ENCODE measurements at regions of chr1 and their contacts with region 1.

Region 1: GRCh38 chr1:230867903-230868735 is at the start of gene C1orf198:
- DNase-seq: peak; percentile 81
- ATAC-seq: peak; percentile 95
- H3K4me3 Mint-ChIP-seq: peak within 1 kb of the TSS; percentile 89
- H3K27ac Mint-ChIP-seq: peak within 1 kb of the TSS; percentile 56
- H3K4me1 Mint-ChIP-seq: peaks cover 13% of the 10 kb centered on the region
- H3K27me3 Mint-ChIP-seq: peaks cover 21% of the 10 kb centered on the region
- CTCF ChIP-seq: no peak
- total RNA-seq, gene C1orf198: 3.5 and 3.9 TPM in 2 replicates

Region 2: GRCh38 chr1:230781594-230781993 is 86.5 kb before region 1 on chr1:
- CTCF ChIA-PET with region 1: no interaction called
- POLR2A ChIA-PET with region 1: no interaction called
- intact Hi-C with region 1: no loop called
- DNase-seq: no peak
- ATAC-seq: no peak
- H3K4me3 Mint-ChIP-seq: no peak overlapping the region
- H3K27ac Mint-ChIP-seq: no peak overlapping the region
- H3K4me1 Mint-ChIP-seq: no peaks in the 10 kb centered on the region
- H3K27me3 Mint-ChIP-seq: peaks cover 6% of the 10 kb centered on the region
- CTCF ChIP-seq: no peak

Region 3: DNA sequence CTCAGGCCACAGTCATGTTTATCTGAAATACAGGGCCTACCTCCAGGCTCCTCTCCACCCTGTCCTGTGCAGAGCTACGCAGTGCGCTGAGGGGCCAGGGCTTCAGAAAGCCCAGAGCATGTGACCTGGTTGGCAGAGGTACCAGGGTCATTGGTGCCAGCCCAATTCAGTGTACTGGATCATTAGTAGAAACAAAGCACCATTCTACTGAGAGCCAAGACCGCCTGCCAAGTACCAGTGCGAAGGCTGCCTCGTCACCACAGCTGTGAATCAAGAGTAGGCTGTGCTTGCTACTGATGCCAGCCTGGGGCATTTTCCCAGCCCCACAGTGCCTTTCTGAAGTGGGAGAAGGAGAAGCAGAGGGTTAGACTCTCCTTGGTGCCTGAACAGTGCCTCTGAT is 61.1 kb before region 1 on chr1:
- CTCF ChIA-PET with region 1: no interaction called
- POLR2A ChIA-PET with region 1: no interaction called
- intact Hi-C with region 1: no loop called
- DNase-seq: no peak
- ATAC-seq: no peak
- H3K4me3 Mint-ChIP-seq: no peak overlapping the region
- H3K27ac Mint-ChIP-seq: no peak overlapping the region
- H3K4me1 Mint-ChIP-seq: no peaks in the 10 kb centered on the region
- H3K27me3 Mint-ChIP-seq: peaks cover 9% of the 10 kb centered on the region
- CTCF ChIP-seq: no peak

Region 4: DNA sequence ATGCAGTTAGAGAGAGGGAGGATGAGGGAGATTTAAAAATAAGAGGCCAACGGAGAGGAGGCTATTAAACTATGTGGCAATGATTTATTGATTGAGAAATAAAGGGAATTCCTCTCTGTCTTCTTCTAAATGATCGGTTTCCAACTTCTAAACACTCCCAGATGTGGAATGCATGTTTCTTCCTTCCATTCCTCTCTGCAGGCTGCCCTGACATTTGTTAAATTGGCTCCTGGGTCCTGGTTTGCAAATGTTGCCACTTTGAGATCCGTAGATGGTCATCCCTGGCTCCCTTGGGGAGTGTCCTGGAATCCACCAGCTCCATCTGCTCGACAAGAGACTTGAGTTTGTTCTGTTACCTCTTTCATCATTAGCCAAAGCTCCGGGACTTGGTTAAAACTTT is 10.5 kb after region 1 on chr1:
- CTCF ChIA-PET with region 1: no interaction called
- POLR2A ChIA-PET with region 1: no interaction called
- intact Hi-C with region 1: no loop called
- DNase-seq: no peak
- ATAC-seq: no peak
- H3K4me3 Mint-ChIP-seq: no peak overlapping the region
- H3K27ac Mint-ChIP-seq: no peak overlapping the region
- H3K4me1 Mint-ChIP-seq: no peaks in the 10 kb centered on the region
- H3K27me3 Mint-ChIP-seq: peaks cover 53% of the 10 kb centered on the region
- CTCF ChIP-seq: no peak

Region 5: DNA sequence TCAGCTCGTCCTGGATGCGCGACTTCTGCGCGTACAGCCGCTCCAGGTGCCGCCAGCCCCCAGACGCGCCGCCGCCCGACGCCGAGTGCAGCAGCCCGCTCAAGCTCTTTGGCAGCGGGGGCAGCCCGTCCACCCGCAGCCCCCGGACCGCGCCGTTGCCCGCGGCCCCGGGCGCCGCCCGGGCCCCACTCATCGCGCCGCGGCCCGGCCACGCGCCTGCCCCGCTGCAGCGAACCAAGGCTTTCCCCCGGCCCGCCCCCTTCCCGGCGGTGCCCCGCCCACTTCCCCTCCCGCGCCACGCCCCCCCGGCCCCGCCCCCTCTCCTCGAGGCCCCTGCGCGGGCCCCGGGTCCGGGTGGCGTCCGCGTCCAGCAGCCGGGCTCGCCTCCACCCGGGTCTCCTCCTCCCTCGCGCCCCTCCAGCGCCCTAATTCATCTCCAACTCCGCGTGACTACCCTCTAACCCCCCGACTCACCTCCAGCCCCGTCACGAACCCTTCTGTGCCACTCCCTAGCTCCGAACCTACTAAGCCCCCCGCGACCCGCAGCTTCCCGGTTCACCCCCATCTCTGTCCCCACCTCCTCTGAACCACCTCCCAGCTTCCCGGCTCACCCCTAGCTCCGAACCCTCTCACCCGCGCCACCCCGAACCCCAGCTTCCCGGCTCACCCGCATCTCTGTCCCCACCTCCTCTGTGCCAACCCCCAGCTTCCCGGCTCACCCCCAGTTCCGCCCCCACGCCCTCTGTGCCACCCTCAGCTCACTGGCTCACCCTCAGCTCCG is 172.1 kb after region 1 on chr1 and contains the start of gene FAM89A:
- CTCF ChIA-PET with region 1: no interaction called
- POLR2A ChIA-PET with region 1: no interaction called
- intact Hi-C with region 1: loop called (anchors 2 kb)
- DNase-seq: peak; percentile 70
- ATAC-seq: peak; percentile 84
- H3K4me3 Mint-ChIP-seq: peak within 1 kb of the TSS; percentile 85
- H3K27ac Mint-ChIP-seq: peak within 1 kb of the TSS; percentile 35
- H3K4me1 Mint-ChIP-seq: peaks cover 17% of the 10 kb centered on the region
- H3K27me3 Mint-ChIP-seq: peaks cover 4% of the 10 kb centered on the region
- CTCF ChIP-seq: no peak
- total RNA-seq, gene FAM89A: 5.2 and 5.3 TPM in 2 replicates

Region 6: GRCh38 chr1:231315887-231316286 is 447.8 kb after region 1 on chr1:
- CTCF ChIA-PET with region 1: no interaction called
- POLR2A ChIA-PET with region 1: no interaction called
- intact Hi-C with region 1: no loop called
- DNase-seq: no peak
- ATAC-seq: peak; percentile 50
- H3K4me3 Mint-ChIP-seq: no peak overlapping the region
- H3K27ac Mint-ChIP-seq: no peak overlapping the region
- H3K4me1 Mint-ChIP-seq: no peaks in the 10 kb centered on the region
- H3K27me3 Mint-ChIP-seq: no peaks in the 10 kb centered on the region
- CTCF ChIP-seq: no peak

Region 7: DNA sequence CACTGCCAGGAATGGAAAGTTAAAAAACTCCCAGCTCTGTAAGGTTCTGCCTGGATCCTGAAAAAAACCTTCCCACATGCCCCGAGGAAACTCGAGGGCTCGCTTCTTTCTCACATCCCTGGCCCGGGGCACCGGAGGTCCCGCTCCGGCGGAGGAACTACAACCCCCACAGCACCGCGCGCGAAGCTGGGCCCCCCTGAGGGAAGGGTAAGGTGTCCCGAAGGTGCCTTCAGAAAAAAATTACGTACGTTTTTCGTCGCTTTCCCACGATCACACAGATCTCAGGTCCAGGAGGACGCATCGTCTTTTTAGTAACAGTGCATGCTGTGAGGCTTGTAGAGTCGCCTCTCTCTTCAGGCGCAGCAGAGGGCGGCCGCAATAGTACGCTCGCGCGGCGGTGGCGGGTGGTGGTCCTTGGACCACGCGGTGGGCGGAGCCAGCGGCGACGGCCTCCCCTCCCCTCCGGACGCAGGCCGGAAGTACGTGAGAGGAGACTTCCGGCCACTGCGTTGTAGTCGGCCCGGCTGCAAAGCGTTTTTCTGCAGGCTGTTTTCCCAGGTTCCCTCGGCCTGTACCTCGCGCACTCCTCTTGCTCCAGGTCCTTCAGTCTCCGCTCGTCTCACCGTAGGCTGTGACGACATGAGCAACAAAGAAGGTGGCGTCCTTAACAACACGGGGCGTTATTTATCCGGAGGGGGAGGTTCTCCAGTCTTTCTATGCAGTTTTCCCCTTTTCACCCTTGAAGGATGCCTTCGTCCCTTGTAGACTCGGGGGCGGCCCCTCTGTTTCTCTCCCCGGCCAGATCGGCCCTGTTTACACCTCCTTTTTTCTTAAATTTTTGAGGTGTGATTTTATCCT is 660.3 kb after region 1 on chr1 and contains the start of gene TSNAX:
- CTCF ChIA-PET with region 1: no interaction called
- POLR2A ChIA-PET with region 1: no interaction called
- intact Hi-C with region 1: loop called (anchors 5 kb)
- DNase-seq: peak; percentile 89
- ATAC-seq: peak; percentile 95
- H3K4me3 Mint-ChIP-seq: peak within 1 kb of the TSS; percentile 99
- H3K27ac Mint-ChIP-seq: peak within 1 kb of the TSS; percentile 100
- H3K4me1 Mint-ChIP-seq: peaks cover 33% of the 10 kb centered on the region
- H3K27me3 Mint-ChIP-seq: no peaks in the 10 kb centered on the region
- CTCF ChIP-seq: no peak
- total RNA-seq, gene TSNAX: 30.0 and 38.7 TPM in 2 replicates